MCF 10A (cell line): ENCODE measurements at regions of chr1 and their contacts with region 1.

Region 1: DNA sequence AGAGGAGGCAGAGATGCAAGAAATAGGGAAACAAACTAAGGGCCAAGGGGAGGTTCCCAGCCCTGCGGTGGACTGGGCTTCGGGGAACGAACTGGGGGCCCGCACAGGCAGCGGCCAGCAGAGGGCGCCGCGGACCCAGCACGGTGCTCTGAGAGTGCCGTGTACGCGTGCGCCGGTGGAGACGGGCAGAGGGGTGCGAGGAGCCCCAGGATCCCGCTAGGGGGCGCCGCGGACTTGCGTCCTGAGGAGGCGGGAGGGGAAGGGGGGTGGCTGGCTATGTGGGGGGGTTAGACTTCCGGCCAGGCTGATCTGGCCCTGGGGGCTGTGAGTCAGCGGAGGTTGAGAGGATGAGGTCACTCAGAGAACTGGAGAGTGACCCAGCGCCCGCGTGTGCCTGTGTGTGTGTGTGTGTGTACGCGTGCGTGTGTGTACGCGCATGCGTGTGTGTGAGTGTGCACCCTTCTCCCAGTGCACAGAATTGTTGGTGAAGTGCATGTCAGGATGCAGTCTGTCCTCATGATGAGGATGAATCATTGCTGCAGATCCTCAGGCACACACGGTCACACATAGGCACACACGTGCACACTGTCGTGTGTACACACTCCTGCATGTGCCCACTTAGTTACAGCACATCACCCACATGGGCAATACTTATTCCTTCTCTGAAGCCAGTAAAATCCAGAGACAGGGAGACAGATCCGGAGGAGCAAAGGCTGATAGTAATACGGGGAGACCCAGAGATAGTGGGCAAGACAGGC is 17.0 kb downstream of the NES start:
- DNase-seq: peak; percentile 99
- H3K4me3 Mint-ChIP-seq: peak overlapping the region; percentile 87
- H3K27ac Mint-ChIP-seq: peak overlapping the region; percentile 83
- H3K4me1 Mint-ChIP-seq: peaks cover 49% of the 10 kb centered on the region
- H3K27me3 Mint-ChIP-seq: no peaks in the 10 kb centered on the region
- CTCF ChIP-seq: peak; percentile 98

Region 2: DNA sequence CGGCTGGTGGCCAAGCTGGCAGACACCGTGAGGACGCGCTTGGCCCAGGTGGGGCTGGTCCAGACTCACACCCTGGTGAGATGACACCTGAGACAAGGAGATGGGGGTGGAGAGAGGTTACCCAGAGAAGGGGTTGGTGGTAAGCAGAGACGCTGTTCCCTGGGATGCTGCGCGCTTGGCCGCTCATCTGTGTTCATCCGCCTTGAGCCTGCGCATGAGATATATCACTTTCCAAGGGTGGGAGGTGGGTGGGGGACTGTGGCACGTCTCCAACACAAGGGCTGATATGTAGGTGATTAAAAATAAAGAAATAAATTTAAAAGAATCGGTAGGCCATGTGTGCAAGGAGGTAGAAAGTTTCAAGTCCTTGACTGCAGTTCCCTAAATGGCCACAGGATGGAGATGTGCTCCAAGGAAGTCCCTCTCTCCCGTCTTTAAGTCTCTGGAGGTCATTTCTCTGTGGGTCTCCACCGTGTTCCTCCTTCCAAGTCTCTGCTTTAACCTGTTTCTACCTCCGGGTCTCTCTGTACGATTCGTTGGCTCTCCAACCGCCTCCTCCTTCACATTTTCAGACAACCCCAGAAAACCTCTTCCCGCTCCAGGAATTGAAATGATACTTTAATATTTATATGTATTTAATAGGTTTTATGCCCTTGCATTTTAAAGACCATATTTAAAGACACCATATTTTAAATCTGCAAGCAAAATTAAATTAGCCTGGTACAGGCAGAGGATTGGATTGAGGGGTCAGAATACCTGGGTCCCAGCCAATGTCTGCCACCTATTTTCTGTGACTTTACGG is 76.2 kb before region 1 on chr1:
- CTCF ChIA-PET with region 1: interaction called, 10 read pairs
- POLR2A ChIA-PET with region 1: interaction called, 3 read pairs
- intact Hi-C with region 1: no loop called
- DNase-seq: peak; percentile 89
- H3K4me3 Mint-ChIP-seq: no peak overlapping the region
- H3K27ac Mint-ChIP-seq: peak overlapping the region; percentile 75
- H3K4me1 Mint-ChIP-seq: peaks cover 6% of the 10 kb centered on the region
- H3K27me3 Mint-ChIP-seq: no peaks in the 10 kb centered on the region
- CTCF ChIP-seq: peak; percentile 98

Region 3: DNA sequence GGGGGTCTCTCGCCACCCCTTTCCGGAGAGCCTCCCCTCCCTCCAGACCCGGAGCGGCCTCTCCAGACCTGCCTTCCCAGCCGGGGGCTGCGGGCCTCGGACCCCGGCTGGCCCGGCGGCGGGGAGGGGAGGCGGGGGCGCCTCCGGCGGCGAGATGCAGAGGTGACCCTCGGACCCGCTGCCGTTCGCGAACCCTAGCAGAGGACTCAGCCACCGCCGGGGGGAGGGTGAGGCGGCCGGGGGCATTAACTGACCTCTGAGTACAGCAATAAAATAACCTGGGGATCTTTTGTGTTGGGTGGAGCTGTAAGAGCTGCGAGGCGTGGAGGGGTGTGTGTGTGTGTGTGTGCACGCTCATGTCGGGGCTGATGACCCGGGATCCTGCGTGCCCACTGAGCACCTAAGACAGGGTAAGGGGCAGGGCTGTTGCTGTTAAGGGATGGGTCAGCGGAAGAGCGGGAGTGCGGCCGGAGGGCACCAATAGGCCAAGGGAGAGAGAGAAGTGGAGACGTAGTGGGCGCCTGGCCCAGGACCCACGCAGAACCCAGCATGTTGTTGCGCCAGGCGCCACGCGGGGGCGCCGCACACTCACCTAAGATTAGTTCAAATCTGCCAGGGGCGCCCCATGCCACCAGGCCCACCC is 34.6 kb before region 1 on chr1:
- CTCF ChIA-PET with region 1: interaction called, 396 read pairs
- POLR2A ChIA-PET with region 1: interaction called, 4 read pairs
- intact Hi-C with region 1: loop called (anchors 1 kb)
- DNase-seq: peak; percentile 61
- H3K4me3 Mint-ChIP-seq: peak overlapping the region; percentile 35
- H3K27ac Mint-ChIP-seq: no peak overlapping the region
- H3K4me1 Mint-ChIP-seq: peaks cover 12% of the 10 kb centered on the region
- H3K27me3 Mint-ChIP-seq: peaks cover 61% of the 10 kb centered on the region
- CTCF ChIP-seq: peak; percentile 91

Region 4: DNA sequence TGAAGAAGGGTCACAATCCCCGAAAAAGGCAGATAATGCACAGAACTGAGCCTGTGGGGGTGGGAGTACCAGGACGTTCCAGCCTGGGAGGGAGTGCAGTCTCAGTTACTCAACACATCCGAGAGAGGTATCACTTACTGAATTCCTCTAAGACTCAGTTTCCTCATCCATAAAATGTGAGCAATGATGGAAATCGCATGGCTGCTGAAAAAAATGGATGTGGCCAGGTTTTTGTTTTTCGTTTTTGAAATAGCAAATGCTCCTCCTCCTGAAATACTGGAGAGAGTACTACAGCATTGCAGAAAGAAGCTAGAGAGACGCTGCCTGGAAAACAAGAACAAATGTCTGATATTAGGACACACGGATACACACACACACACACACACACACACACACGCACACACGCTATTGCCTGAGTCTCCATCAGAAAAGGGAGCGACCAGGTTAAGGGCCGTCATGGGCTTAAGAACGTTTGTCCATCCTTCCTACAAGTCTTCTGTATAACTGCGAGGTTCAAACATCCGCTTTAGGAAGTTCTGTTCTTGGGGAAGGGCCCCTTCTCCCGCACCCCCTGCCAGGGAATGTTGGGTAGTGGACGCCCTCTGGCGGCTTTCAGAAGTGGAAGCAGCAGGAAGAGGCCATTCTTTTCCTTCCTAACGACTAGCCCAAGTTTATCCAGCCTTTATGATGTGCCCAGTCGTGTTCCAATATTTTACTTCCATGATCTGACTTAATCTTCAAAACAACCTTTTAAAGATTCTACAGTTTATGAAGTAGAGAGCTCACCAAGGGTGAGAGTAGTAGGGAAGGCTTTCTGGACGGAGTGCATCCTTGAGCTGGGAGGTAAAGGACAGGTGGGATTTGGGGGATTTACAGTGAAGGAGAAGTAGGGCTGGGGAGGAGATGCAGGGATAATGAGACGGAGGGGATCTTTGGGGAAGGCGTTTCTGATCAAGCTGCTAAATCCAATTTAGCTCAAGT is 17.7 kb after region 1 on chr1:
- CTCF ChIA-PET with region 1: interaction called, 552 read pairs
- POLR2A ChIA-PET with region 1: interaction called, 19 read pairs
- intact Hi-C with region 1: loop called (anchors 1 kb)
- DNase-seq: peak; percentile 87
- H3K4me3 Mint-ChIP-seq: no peak overlapping the region
- H3K27ac Mint-ChIP-seq: no peak overlapping the region
- H3K4me1 Mint-ChIP-seq: peaks cover 6% of the 10 kb centered on the region
- H3K27me3 Mint-ChIP-seq: peaks cover 46% of the 10 kb centered on the region
- CTCF ChIP-seq: peak; percentile 91

Region 5: GRCh38 chr1:156711011-156711817 is 51.0 kb after region 1 on chr1:
- CTCF ChIA-PET with region 1: interaction called, 23 read pairs
- POLR2A ChIA-PET with region 1: interaction called, 10 read pairs
- intact Hi-C with region 1: loop called (anchors 1 kb)
- DNase-seq: no peak
- H3K4me3 Mint-ChIP-seq: no peak overlapping the region
- H3K27ac Mint-ChIP-seq: no peak overlapping the region
- H3K4me1 Mint-ChIP-seq: peaks cover 37% of the 10 kb centered on the region
- H3K27me3 Mint-ChIP-seq: no peaks in the 10 kb centered on the region
- CTCF ChIP-seq: no peak

Region 6: GRCh38 chr1:156740679-156741612 is 80.8 kb after region 1 on chr1 and contains the start of gene MRPL24:
- CTCF ChIA-PET with region 1: interaction called, 7 read pairs
- POLR2A ChIA-PET with region 1: interaction called, 10 read pairs
- intact Hi-C with region 1: no loop called
- DNase-seq: peak; percentile 100
- H3K4me3 Mint-ChIP-seq: peak within 1 kb of the TSS; percentile 100
- H3K27ac Mint-ChIP-seq: peak within 1 kb of the TSS; percentile 98
- H3K4me1 Mint-ChIP-seq: peaks cover 30% of the 10 kb centered on the region
- H3K27me3 Mint-ChIP-seq: no peaks in the 10 kb centered on the region
- CTCF ChIP-seq: no peak
- total RNA-seq, gene MRPL24: 233 and 261 TPM in 2 replicates

Region 7: DNA sequence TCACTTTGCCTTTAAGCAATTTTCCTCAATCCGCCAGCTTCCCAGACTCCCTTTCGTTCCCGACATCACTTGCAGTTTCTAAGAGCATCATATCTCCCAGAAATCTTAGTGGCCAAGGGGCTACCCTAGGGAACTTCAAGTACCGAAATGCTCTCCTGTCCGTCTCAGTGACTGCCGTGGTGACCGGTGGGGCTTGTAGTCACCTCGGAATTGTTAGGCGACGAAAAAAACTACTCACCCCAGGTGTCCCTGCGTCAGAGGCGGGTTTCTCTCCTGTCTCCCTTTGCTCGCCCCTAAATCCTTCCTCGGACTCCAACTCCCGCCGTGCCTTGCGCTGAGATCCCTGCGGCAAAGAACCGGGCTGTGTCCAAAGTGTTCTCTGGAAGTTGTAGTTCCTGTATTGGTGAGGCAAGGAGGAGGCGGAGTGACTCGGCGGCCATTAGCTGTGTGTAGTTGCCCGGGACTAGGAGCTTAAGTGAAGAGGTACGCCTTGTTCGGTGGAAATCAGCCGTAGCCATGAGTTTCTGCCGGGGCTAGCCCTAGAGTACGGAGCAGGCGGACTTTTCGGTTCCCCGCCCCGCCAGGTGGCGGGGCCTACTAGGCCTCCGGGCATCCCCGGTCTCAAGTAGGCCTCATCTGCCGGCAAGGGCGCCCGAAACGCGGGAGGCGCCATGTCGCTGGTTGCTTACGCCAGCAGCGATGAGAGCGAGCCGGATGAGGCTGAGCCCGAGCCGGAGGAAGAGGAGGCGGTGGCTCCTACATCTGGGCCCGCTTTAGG is 107.1 kb after region 1 on chr1 and contains the start of gene PRCC:
- CTCF ChIA-PET with region 1: interaction called, 7 read pairs
- POLR2A ChIA-PET with region 1: interaction called, 15 read pairs
- intact Hi-C with region 1: no loop called
- DNase-seq: peak; percentile 100
- H3K4me3 Mint-ChIP-seq: no peak within 1 kb of the TSS
- H3K27ac Mint-ChIP-seq: no peak within 1 kb of the TSS
- H3K4me1 Mint-ChIP-seq: peaks cover 36% of the 10 kb centered on the region
- H3K27me3 Mint-ChIP-seq: no peaks in the 10 kb centered on the region
- CTCF ChIP-seq: no peak
- total RNA-seq, gene PRCC: 112 and 131 TPM in 2 replicates